Activated CD4-positive, alpha-beta memory T cell treated with anti-CD3 and anti-CD28 coated beads for 36 hours (primary cell): ENCODE measurements at regions of chr3 and their contacts with region 1.

Region 1: DNA sequence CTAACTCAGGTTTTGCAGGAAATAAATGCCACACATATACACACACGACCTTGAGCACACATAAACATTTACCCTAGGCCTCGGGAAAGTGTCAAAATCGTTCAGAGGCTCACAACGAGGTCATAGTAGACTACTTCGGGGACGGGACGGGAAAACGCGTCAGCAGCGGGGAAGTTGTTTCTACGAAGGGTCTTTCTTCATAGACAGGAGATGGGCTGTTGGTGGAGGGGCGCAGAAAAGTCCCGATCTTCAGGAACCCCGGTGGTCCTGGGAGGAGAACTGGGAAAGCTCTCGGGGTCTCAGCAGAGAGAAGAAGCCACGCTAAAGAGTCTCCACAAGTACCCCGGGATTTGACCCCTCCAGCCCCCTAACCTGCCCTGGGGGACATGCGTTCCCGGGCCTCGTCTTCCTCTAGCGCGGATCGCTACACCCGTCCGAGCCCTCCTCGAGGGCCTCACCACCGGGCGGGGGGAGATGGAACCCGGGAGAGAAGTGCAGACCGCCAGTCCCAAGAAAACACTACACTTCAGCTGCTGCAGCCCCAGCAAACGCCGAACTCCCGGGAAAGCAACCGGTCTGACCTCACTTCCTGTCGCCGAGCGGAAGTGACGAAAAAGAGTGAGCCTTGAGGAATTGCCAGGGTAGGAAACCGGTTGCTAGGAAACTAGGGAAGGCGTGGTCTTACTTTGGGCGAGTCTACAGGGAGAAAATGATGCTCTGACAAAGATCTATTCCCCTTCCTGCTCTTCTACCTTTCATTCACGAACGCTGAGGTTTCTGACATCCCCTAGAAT is at the start of gene PIK3R4:
- DNase-seq: peak; percentile 96
- H3K4me3 Mint-ChIP-seq: peak within 1 kb of the TSS; percentile 81
- H3K27ac Mint-ChIP-seq: peak within 1 kb of the TSS; percentile 90
- H3K4me1 Mint-ChIP-seq: peaks cover 52% of the 10 kb centered on the region
- H3K27me3 Mint-ChIP-seq: no peaks in the 10 kb centered on the region
- total RNA-seq, gene PIK3R4: 28.3 to 28.5 TPM

Region 2: DNA sequence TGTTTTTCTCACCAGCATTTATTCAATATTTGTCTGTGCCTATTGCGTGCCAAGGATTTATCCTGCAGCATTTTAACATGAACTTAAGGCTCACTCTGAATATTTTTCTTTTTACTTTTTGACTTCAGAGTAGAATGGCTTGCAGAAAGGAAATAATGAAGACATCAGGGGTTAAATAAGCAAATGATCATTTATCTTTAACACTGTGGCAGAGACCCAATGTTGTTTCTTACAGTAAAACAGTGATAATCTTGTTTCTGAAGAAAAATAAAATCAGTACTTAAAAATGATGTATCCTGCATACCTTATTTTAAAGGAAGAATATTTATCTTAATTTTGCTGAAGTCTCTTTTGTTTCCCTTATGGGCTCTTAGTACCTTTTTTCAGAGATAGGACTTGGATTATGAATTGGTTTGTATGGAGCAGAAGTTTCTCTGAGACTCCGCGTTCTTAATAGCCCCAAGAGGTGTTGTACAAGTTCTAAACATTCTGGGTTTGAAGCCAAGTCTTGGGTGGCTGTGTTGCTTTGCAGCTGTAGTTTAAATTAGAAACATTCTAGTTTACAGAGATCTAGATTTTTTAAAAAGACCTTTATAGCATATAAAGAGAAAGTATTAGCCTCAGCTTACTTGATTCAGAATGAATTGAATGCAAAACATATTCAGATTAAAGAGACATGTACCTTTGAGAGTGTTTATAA is 189.0 kb before region 1 on chr3:
- CTCF ChIA-PET with region 1: no interaction called
- POLR2A ChIA-PET with region 1: no interaction called
- intact Hi-C with region 1: no loop called
- DNase-seq: no peak
- H3K4me3 Mint-ChIP-seq: no peak overlapping the region
- H3K27ac Mint-ChIP-seq: no peak overlapping the region
- H3K4me1 Mint-ChIP-seq: no peaks in the 10 kb centered on the region
- H3K27me3 Mint-ChIP-seq: peaks cover 14% of the 10 kb centered on the region

Region 3: GRCh38 chr3:130699765-130700164 is 46.7 kb before region 1 on chr3:
- CTCF ChIA-PET with region 1: no interaction called
- POLR2A ChIA-PET with region 1: no interaction called
- intact Hi-C with region 1: loop called (anchors 2 kb)
- DNase-seq: no peak
- H3K4me3 Mint-ChIP-seq: no peak overlapping the region
- H3K27ac Mint-ChIP-seq: no peak overlapping the region
- H3K4me1 Mint-ChIP-seq: no peaks in the 10 kb centered on the region
- H3K27me3 Mint-ChIP-seq: no peaks in the 10 kb centered on the region

Region 4: GRCh38 chr3:130759699-130760338 is 13.4 kb after region 1 on chr3:
- CTCF ChIA-PET with region 1: interaction called, 8 read pairs
- POLR2A ChIA-PET with region 1: no interaction called
- intact Hi-C with region 1: loop called (anchors 1 kb)
- DNase-seq: peak; percentile 69
- H3K4me3 Mint-ChIP-seq: no peak overlapping the region
- H3K27ac Mint-ChIP-seq: no peak overlapping the region
- H3K4me1 Mint-ChIP-seq: no peaks in the 10 kb centered on the region
- H3K27me3 Mint-ChIP-seq: peaks cover 9% of the 10 kb centered on the region

Region 5: GRCh38 chr3:130892759-130893375 is 146.4 kb after region 1 on chr3:
- CTCF ChIA-PET with region 1: interaction called, 30 read pairs
- POLR2A ChIA-PET with region 1: interaction called, 11 read pairs
- intact Hi-C with region 1: loop called (anchors 1 kb)
- DNase-seq: peak; percentile 69
- H3K4me3 Mint-ChIP-seq: peak overlapping the region; percentile 95
- H3K27ac Mint-ChIP-seq: peak overlapping the region; percentile 99
- H3K4me1 Mint-ChIP-seq: peaks cover 36% of the 10 kb centered on the region
- H3K27me3 Mint-ChIP-seq: no peaks in the 10 kb centered on the region

Region 6: DNA sequence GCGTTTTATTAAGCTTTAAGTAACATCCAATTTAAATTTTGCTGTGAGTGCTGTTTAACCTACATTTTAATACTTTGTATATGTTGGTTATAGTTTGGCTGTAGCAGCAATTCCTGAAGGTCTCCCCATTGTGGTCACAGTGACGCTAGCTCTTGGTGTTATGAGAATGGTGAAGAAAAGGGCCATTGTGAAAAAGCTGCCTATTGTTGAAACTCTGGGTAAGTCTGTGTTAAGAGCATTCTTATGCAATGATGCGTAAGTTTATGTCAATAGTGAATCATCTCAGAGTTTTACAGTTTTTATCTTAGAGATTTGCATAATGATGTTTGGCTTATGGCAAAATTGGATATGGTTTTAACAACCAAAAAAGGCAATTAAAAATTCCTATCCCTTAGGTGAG is 217.4 kb after region 1 on chr3:
- CTCF ChIA-PET with region 1: no interaction called
- POLR2A ChIA-PET with region 1: no interaction called
- intact Hi-C with region 1: no loop called
- DNase-seq: no peak
- H3K4me3 Mint-ChIP-seq: no peak overlapping the region
- H3K27ac Mint-ChIP-seq: no peak overlapping the region
- H3K4me1 Mint-ChIP-seq: no peaks in the 10 kb centered on the region
- H3K27me3 Mint-ChIP-seq: no peaks in the 10 kb centered on the region

Region 7: DNA sequence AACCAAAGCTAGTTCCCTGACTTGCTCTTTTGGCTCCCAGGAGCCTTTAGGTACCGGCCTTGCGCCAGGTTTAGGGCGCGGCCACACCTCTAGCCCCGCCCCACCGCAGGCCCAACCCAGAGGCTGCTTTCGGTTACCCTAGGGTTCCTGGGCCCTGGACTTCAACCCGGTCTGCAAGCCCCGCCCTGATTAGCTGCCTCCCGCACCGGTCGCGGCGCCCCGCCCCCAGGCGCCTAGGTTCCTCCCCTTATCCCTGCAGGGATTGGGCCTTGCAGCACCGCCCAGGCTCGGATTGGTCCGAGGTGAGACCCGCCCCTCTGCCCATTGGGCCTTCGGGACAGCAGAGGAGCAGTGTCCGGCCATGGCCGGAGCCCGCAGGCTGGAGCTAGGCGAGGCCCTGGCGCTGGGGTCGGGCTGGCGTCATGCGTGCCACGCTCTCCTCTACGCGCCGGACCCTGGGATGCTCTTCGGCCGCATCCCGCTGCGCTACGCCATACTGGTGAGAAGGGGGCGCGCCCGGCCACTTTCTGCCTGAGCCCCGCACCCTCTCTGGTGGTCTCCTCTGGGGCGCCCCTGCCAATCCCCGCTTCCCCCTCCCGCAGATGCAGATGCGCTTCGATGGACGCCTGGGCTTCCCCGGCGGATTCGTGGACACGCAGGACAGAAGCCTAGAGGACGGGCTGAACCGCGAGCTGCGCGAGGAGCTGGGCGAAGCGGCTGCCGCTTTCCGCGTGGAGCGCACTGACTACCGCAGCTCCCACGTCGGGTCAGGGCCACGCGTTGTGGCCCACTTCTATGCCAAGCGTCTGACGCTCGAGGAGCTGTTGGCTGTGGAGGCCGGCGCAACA is 635.2 kb after region 1 on chr3 and contains the start of gene NUDT16:
- CTCF ChIA-PET with region 1: no interaction called
- POLR2A ChIA-PET with region 1: no interaction called
- intact Hi-C with region 1: loop called (anchors 10 kb)
- DNase-seq: peak; percentile 99
- H3K4me3 Mint-ChIP-seq: peak within 1 kb of the TSS; percentile 93
- H3K27ac Mint-ChIP-seq: peak within 1 kb of the TSS; percentile 84
- H3K4me1 Mint-ChIP-seq: peaks cover 22% of the 10 kb centered on the region
- H3K27me3 Mint-ChIP-seq: no peaks in the 10 kb centered on the region
- total RNA-seq, gene NUDT16: 7.4 to 8.6 TPM

Region 8: DNA sequence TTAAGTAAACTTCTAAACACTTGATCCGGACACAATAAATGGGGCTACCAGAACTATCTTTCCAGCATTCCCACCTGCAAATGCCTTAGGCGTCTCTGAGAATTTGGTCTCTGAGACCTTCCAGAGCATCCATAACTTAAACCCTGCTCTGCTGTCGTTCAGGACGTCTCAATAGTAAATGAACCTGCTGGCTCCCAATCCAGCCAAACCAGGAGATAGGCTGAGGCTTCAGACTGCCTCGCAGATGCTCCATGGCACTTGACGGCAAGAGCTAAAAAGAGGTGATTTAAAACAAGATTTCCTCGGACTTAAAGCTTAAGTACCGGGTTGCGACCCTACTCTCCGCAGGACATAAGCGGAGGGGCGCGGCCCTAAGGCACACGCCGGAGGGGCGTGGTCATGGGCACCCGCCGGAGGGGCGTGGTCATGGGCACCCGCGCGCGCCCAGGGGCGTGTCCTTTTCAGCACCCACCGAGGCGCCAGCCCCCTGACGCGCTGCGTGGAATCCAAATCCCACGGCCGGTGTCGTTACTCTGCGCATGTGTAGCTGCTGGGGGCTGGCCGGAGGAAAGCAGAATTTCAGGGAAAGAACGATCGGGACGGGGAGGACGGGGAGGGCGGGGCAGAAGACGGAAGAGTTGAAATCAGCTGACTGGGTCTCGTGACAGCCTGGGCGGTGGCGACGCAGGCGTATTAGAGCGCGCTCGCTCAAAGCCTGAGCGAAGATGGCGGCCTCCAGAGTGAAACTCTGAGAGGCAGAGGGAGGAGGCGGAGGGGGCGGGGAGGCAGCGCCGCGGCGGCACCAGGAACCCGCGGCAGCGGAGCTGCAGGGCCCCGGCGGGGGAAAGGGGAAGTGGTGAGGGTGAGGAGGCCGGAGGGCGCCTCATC is 1670.6 kb after region 1 on chr3 and contains the start of gene DNAJC13:
- CTCF ChIA-PET with region 1: no interaction called
- POLR2A ChIA-PET with region 1: no interaction called
- intact Hi-C with region 1: loop called (anchors 5 kb)
- DNase-seq: peak; percentile 94
- H3K4me3 Mint-ChIP-seq: peak within 1 kb of the TSS; percentile 98
- H3K27ac Mint-ChIP-seq: peak within 1 kb of the TSS; percentile 90
- H3K4me1 Mint-ChIP-seq: peaks cover 31% of the 10 kb centered on the region
- H3K27me3 Mint-ChIP-seq: no peaks in the 10 kb centered on the region
- total RNA-seq, gene DNAJC13: 33.5 to 34.5 TPM